Dorsolateral prefrontal cortex (tissue), 120 donors: ENCODE measurements at regions of chr11 and their contacts with region 1.

Region 1: GRCh38 chr11:57567515-57568329 is at the start of gene UBE2L6:
- DNase-seq: peak; percentile 51 to 84 (median 70)
- H3K4me3 ChIP-seq: peak within 1 kb of the TSS; percentile 65 to 98 (median 92)
- H3K27ac ChIP-seq: peak within 1 kb of the TSS; percentile 66 to 98 (median 92)
- H3K27me3 ChIP-seq: no peaks in the 10 kb centered on the region
- CTCF ChIP-seq: peak in 34 of 56 donors; percentile 77 to 95 (median 88)
- total RNA-seq, gene UBE2L6: 40.6 to 139 (median 59.0) TPM

Region 2: GRCh38 chr11:57370251-57370650 is 197.5 kb before region 1 on chr11:
- intact Hi-C with region 1: no loop called
- DNase-seq: no peak
- H3K4me3 ChIP-seq: no peak overlapping the region
- H3K27ac ChIP-seq: no peak overlapping the region
- H3K27me3 ChIP-seq: no peaks in the 10 kb centered on the region
- CTCF ChIP-seq: no peak

Region 3: DNA sequence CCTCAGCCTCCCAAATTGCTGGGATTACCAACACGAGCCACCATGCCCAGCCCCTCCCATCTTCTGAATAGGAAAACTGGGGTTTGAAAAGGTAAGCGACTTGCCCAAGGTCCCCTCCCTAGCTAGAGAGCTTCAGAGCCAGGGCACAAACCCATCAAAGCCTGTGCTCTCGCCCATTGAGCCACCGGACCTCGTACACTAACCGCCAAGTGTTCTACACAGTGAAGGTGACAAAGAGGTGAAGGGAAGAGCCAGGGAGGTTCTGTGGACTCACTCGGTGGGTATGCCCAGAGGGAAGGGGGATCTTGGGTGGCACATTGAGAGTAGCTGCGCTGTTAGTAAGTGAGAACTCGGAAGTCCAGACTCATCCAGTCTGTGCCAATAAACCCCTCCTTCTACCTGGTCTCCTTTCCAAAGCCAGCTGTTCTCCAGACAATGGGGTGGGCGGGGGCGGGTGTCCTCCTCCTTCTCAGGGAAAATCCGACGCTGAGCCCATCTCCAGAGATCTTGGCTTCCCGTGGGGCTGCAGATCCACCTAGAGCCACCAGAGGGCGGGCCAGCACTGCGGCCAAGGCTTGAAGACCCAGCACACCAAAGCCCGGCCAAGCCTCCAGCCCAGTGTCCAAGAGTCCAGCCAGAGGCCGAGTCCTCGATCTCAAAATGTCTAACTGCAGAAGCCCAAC is 110.6 kb before region 1 on chr11:
- intact Hi-C with region 1: no loop called
- DNase-seq: peak; percentile 82 to 93 (median 90)
- H3K4me3 ChIP-seq: peak overlapping the region in 13 of 59 donors; percentile 7 to 69 (median 21)
- H3K27ac ChIP-seq: no peak overlapping the region
- H3K27me3 ChIP-seq: peaks cover 0 to 43% (median 13%) of the 10 kb centered on the region in 45 donors
- CTCF ChIP-seq: peak; percentile 90 to 99 (median 98)

Region 4: DNA sequence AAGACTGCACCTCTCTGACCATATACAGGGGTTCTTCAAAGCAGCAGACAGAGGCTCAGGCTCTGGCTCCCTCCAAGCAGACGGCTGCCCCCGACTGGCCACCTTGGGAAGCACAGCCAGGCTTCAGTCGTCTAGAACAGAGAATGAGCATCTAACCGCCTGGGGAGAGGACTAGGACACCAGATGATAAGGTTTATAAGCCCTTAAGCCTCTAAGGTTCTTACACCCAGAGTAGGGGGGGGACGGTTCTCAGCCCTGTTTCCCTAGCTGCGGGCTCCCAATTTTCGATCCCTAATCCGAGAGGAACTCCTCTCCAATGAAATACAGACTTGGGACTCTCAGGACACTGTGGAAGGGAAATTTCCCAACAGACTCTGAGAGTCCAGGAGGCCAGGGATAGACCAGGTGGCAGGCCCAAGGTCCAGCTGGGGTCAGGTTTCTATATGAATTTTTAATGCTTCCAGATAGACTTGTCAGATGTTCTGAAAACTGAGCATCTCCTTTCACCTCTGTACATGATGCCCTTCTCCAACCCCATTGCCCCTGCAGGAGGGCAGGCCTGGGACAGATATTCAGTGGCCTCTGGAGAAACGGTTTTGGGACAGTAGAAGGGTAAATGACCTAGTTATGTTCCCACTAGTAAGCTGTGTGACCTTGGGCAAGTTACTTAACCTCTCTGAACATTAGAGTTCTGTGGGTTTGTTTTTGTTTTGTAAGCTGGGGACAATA is 87.1 kb before region 1 on chr11:
- intact Hi-C with region 1: no loop called
- DNase-seq: peak in 8 of 10 donors; percentile 40 to 84 (median 73)
- H3K4me3 ChIP-seq: no peak overlapping the region
- H3K27ac ChIP-seq: no peak overlapping the region
- H3K27me3 ChIP-seq: peaks cover 0 to 55% (median 8%) of the 10 kb centered on the region in 45 donors
- CTCF ChIP-seq: peak in 55 of 56 donors; percentile 16 to 74 (median 62)

Region 5: GRCh38 chr11:57619331-57619730 is 51.6 kb after region 1 on chr11:
- intact Hi-C with region 1: no loop called
- DNase-seq: no peak
- H3K4me3 ChIP-seq: no peak overlapping the region
- H3K27ac ChIP-seq: no peak overlapping the region
- H3K27me3 ChIP-seq: no peaks in the 10 kb centered on the region
- CTCF ChIP-seq: no peak

Region 6: DNA sequence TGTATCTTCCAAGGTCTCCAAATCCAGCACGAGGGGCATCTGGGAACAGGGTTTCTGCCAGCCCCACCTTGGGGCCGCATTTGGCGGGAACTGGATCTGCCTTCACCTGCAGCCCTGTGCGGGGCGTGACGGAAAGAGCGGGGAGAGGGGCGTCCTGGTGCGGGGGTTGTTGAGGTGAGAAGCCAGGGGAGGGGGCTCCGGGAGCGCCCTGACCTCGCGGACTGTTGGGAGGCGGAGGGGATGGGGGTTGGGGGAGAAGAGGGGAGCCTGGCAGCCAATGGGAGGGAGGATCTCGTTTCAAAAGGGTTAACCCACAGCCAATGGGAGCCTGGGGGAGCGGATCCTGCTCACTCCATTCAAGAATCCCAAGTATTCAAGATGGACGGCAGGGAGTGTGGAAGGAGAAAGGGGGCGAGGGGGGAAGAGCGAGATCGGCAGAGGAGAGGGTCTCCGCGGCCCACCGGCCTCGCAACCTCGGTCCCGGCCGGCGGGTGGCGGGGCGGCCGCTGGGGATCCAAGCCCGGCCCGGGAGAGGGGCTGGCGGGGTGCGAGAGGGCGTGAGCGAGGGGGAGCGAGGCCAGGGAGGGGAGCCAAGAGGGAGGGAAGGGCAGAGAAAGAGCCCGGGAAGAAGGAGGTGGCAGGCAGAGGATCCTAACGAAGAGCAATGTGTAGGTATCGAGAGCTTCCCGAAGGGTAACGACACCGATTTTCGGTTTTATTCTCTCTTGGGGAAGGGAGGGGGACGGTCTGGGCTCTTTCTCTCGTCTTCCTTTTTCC is 70.5 kb after region 1 on chr11:
- intact Hi-C with region 1: loop called (anchors 2 kb)
- DNase-seq: peak in 9 of 10 donors; percentile 69 to 90 (median 83)
- H3K4me3 ChIP-seq: peak overlapping the region; percentile 52 to 90 (median 77)
- H3K27ac ChIP-seq: peak overlapping the region in 28 of 59 donors; percentile 23 to 88 (median 57)
- H3K27me3 ChIP-seq: no peaks in the 10 kb centered on the region
- CTCF ChIP-seq: peak in 2 of 56 donors; percentile 5 to 11

Region 7: DNA sequence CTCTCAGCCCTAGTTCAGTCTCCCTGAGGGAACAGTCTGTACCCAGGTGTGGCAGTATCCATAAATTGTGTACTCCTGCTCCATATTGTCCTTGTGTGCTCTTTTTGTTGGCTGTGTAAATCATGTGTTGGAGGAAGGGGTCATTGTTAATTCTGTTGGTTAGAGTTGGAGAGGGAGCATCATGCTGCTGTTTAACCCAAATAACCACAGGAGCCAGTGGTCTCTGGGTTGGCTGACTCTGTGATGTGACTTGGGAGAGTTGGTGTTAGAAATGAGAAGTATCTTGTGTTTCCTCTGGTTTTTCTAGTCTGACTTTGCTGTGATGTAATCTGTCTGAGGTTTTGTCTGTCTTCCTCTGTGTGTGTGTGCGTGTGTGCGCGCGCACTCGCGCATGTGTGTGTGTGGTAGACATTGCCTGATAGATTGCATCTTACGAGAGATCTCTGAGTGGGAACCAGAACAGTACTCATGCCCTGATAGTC is 224.4 kb after region 1 on chr11:
- intact Hi-C with region 1: loop called in 1 of 2 experiments (anchors 10 kb)
- DNase-seq: peak in 3 of 10 donors; percentile 51 to 64 (median 57)
- H3K4me3 ChIP-seq: peak overlapping the region in 1 of 59 donors; percentile 4
- H3K27ac ChIP-seq: peak overlapping the region in 43 of 59 donors; percentile 4 to 76 (median 49)
- H3K27me3 ChIP-seq: no peaks in the 10 kb centered on the region
- CTCF ChIP-seq: no peak